MCF 10A (cell line): ENCODE measurements at regions of chr6 and their contacts with region 1.

Region 1: GRCh38 chr6:85354761-85355618 is 94.9 kb upstream of the NT5E start:
- DNase-seq: peak; percentile 73
- H3K4me3 Mint-ChIP-seq: no peak overlapping the region
- H3K27ac Mint-ChIP-seq: no peak overlapping the region
- H3K4me1 Mint-ChIP-seq: peaks cover 9% of the 10 kb centered on the region
- H3K27me3 Mint-ChIP-seq: no peaks in the 10 kb centered on the region
- CTCF ChIP-seq: peak; percentile 96

Region 2: DNA sequence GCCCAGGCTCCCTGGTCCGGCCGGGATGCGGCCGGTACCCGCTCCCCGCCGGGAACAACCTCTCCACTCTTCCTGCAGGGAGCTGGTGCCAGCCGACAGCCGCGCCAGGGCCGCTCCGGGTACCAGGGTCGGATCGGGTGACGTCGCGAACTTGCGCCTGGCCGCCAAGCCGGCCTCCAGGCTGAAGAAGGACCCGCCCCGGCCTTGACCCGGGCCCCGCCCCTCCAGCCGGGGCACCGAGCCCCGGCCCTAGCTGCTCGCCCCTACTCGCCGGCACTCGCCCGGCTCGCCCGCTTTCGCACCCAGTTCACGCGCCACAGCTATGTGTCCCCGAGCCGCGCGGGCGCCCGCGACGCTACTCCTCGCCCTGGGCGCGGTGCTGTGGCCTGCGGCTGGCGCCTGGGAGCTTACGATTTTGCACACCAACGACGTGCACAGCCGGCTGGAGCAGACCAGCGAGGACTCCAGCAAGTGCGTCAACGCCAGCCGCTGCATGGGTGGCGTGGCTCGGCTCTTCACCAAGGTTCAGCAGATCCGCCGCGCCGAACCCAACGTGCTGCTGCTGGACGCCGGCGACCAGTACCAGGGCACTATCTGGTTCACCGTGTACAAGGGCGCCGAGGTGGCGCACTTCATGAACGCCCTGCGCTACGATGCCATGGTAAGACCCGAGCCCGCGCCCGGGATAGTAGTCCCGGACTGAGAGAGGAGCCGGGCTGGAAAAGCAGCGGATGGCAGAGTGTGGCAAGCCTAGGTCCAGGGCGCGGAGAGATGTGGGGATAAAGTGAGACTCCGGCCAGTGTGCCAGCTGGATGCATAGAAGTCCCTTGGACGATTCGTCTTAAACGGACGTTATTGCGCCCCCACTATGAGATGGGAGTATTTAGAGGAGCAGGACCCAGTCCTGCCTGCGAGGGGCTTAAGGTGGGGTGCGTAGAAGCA is 95.1 kb after region 1 on chr6 and contains the start of gene NT5E:
- CTCF ChIA-PET with region 1: interaction called, 11 read pairs
- POLR2A ChIA-PET with region 1: interaction called, 68 read pairs
- intact Hi-C with region 1: loop called (anchors 2 kb)
- DNase-seq: peak; percentile 69
- H3K4me3 Mint-ChIP-seq: peak within 1 kb of the TSS; percentile 88
- H3K27ac Mint-ChIP-seq: peak within 1 kb of the TSS; percentile 92
- H3K4me1 Mint-ChIP-seq: peaks cover 47% of the 10 kb centered on the region
- H3K27me3 Mint-ChIP-seq: no peaks in the 10 kb centered on the region
- CTCF ChIP-seq: no peak
- total RNA-seq, gene NT5E: 112 and 121 TPM in 2 replicates

Region 3: GRCh38 chr6:85490431-85491253 is 135.7 kb after region 1 on chr6:
- CTCF ChIA-PET with region 1: interaction called, 22 read pairs
- POLR2A ChIA-PET with region 1: interaction called, 4 read pairs
- intact Hi-C with region 1: no loop called
- DNase-seq: peak; percentile 60
- H3K4me3 Mint-ChIP-seq: no peak overlapping the region
- H3K27ac Mint-ChIP-seq: no peak overlapping the region
- H3K4me1 Mint-ChIP-seq: peaks cover 23% of the 10 kb centered on the region
- H3K27me3 Mint-ChIP-seq: no peaks in the 10 kb centered on the region
- CTCF ChIP-seq: no peak

Region 4: GRCh38 chr6:85498596-85499258 is 143.7 kb after region 1 on chr6:
- CTCF ChIA-PET with region 1: interaction called, 18 read pairs
- POLR2A ChIA-PET with region 1: interaction called, 3 read pairs
- intact Hi-C with region 1: no loop called
- DNase-seq: peak; percentile 97
- H3K4me3 Mint-ChIP-seq: no peak overlapping the region
- H3K27ac Mint-ChIP-seq: no peak overlapping the region
- H3K4me1 Mint-ChIP-seq: peaks cover 32% of the 10 kb centered on the region
- H3K27me3 Mint-ChIP-seq: no peaks in the 10 kb centered on the region
- CTCF ChIP-seq: no peak

Region 5: DNA sequence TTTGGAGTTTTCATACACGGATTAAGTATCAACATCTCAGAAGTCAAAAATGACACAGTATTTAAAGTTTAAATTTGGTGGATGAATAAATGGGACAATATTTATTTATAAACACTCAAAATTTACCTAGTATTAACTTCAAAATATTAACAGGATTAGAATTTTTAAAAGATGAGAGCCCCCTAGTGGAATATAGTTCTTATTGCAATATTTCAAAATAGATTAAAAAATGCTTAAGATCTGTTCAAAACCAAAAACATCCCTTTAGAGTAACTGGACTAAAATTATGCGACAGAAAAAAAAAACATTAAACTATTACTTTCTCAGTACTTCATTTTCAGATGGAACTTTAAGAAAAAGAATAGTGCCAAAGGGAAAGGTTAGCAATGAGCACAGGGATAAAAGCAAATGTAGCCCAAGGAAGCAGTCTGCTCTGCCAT is 182.1 kb after region 1 on chr6:
- CTCF ChIA-PET with region 1: interaction called, 60 read pairs
- POLR2A ChIA-PET with region 1: interaction called, 4 read pairs
- intact Hi-C with region 1: loop called (anchors 1 kb)
- DNase-seq: peak; percentile 6
- H3K4me3 Mint-ChIP-seq: no peak overlapping the region
- H3K27ac Mint-ChIP-seq: no peak overlapping the region
- H3K4me1 Mint-ChIP-seq: no peaks in the 10 kb centered on the region
- H3K27me3 Mint-ChIP-seq: no peaks in the 10 kb centered on the region
- CTCF ChIP-seq: peak; percentile 58